Sigmoid colon (tissue), 7 donors: ENCODE measurements at regions of chr13 and their contacts with region 1.

Region 1: GRCh38 chr13:99436686-99437416 is 64.4 kb upstream of the TM9SF2 start:
- DNase-seq: peak; percentile 91
- H3K4me3 ChIP-seq: no peak overlapping the region
- H3K27ac ChIP-seq: no peak overlapping the region
- H3K4me1 ChIP-seq: peaks cover 0 to 7% (median 0%) of the 10 kb centered on the region in 4 donors
- H3K27me3 ChIP-seq: no peaks in the 10 kb centered on the region
- CTCF ChIP-seq: peak; percentile 96 to 100 (median 99)
- EP300 ChIP-seq: no peak
- POLR2A ChIP-seq: no peak

Region 2: GRCh38 chr13:99176309-99177276 is 260.3 kb before region 1 on chr13:
- intact Hi-C with region 1: loop called (anchors 1 kb)
- DNase-seq: peak; percentile 81
- H3K4me3 ChIP-seq: peak overlapping the region in 1 of 4 donors; percentile 11
- H3K27ac ChIP-seq: no peak overlapping the region
- H3K4me1 ChIP-seq: no peaks in the 10 kb centered on the region
- H3K27me3 ChIP-seq: peaks cover 0 to 10% (median 0%) of the 10 kb centered on the region in 3 donors
- CTCF ChIP-seq: peak; percentile 76 to 88 (median 82)
- EP300 ChIP-seq: no peak
- POLR2A ChIP-seq: no peak

Region 3: DNA sequence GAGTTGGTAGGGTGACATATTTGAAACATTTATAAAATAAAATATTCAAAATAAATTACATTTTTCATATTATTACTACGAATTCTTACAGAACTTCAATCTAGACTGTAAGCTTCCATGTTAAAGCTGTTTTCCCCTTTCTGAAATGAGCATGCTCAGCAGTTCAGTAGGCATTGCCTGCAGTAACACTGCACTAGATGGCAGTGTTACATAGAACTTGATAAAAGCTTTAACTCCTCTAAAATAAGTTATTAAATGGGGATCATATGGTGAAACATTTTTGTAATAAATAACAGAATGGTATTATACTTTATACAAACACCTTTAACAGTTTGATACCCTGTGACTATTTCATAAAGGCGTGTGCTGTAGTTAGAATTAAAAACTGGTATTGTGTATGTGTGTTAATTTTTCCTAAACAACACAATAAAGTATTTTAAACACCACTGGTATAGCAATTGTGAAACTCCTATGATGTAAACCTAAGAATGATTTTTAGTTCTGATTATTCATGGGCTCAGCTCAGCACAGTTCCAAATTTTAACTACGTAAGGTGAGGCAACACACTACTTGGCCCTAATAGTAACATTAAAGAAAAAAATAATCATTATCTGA is 167.1 kb before region 1 on chr13:
- intact Hi-C with region 1: loop called (anchors 2 kb)
- DNase-seq: no peak
- H3K4me3 ChIP-seq: no peak overlapping the region
- H3K27ac ChIP-seq: peak overlapping the region in 1 of 4 donors; percentile 22
- H3K4me1 ChIP-seq: no peaks in the 10 kb centered on the region
- H3K27me3 ChIP-seq: no peaks in the 10 kb centered on the region
- CTCF ChIP-seq: peak in 3 of 4 experiments; percentile 24 to 54 (median 27)
- EP300 ChIP-seq: no peak
- POLR2A ChIP-seq: no peak

Region 4: DNA sequence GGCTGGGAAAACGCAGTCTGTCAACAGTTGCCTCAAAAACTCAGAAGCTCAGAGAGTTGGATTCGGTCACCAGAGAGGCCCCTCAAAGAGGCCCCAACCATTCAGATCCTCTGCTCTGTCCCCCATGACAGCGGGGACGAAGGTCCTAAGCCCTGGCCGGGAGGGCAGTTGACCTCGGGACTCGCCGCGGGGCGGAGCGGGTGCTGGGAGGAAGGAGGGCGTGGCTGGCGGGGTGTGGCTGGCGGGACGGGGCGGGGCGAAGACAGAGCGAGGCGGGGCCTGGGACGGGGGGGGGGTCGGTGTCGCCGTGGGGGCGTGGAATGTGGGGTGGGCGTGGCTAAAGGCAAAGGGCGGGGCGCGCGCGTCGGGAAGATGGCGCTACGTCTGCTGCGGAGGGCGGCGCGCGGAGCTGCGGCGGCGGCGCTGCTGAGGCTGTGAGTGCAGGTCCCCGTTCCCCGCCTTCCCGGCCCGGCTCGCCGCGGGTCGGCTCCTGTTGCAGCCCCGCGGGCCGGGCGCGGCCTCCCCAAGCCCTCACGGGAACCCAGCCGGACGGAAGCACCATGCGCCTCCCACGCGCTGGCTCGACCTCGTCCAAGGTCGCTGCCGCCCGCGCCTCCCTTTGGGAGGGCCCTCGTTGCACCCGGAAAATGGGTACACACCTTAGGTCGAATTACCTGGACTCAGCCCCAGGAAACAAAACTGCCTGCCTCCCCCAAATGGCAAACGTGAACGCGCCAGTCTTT is 169.6 kb after region 1 on chr13:
- intact Hi-C with region 1: loop called (anchors 10 kb)
- DNase-seq: peak; percentile 94
- H3K4me3 ChIP-seq: peak within 1 kb of the TSS; percentile 71 to 87 (median 86)
- H3K27ac ChIP-seq: peak within 1 kb of the TSS; percentile 82 to 85 (median 83)
- H3K4me1 ChIP-seq: peaks cover 0 to 14% (median 4%) of the 10 kb centered on the region in 4 donors
- H3K27me3 ChIP-seq: no peaks in the 10 kb centered on the region
- CTCF ChIP-seq: no peak
- EP300 ChIP-seq: no peak
- POLR2A ChIP-seq: no peak